Mammary epithelial cell (primary cell): ENCODE measurements at regions of chr1 and their contacts with region 1.

Region 1: GRCh38 chr1:198465201-198466144 is 75.0 kb downstream of the ATP6V1G3 start:
- DNase-seq: peak; percentile 66
- H3K4me3 ChIP-seq: no peak overlapping the region
- H3K27ac ChIP-seq: peak overlapping the region; percentile 25
- H3K4me1 ChIP-seq: peaks cover 29% of the 10 kb centered on the region
- H3K27me3 ChIP-seq: no peaks in the 10 kb centered on the region
- CTCF ChIP-seq: peak; percentile 61 to 65

Region 2: DNA sequence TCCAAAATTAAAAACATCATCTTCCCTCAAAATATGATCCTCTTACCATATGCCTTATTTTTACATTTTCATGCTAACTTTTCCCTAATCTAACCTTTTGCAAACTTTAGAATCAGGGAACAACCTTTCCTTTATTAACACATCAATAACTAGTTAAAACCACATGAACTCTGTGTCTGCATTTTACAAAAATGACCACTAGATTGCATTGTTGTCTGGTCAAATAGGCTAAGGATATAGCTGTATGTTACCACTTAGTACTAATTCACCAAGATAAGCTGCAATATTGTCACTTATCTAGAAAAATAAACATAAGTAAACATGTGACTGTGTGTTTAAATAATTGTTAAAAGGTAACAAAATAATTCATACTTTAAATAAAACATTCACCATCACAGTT is 772.5 kb before region 1 on chr1:
- CTCF ChIA-PET with region 1: no interaction called
- dilution Hi-C with region 1: no loop called
- in situ Hi-C with region 1: no loop called
- intact Hi-C with region 1: loop called (anchors 10 kb)
- DNase-seq: peak; percentile 11
- H3K4me3 ChIP-seq: no peak overlapping the region
- H3K27ac ChIP-seq: no peak overlapping the region
- H3K4me1 ChIP-seq: peaks cover 5% of the 10 kb centered on the region
- H3K27me3 ChIP-seq: no peaks in the 10 kb centered on the region
- CTCF ChIP-seq: peak; percentile 29 to 55

Region 3: DNA sequence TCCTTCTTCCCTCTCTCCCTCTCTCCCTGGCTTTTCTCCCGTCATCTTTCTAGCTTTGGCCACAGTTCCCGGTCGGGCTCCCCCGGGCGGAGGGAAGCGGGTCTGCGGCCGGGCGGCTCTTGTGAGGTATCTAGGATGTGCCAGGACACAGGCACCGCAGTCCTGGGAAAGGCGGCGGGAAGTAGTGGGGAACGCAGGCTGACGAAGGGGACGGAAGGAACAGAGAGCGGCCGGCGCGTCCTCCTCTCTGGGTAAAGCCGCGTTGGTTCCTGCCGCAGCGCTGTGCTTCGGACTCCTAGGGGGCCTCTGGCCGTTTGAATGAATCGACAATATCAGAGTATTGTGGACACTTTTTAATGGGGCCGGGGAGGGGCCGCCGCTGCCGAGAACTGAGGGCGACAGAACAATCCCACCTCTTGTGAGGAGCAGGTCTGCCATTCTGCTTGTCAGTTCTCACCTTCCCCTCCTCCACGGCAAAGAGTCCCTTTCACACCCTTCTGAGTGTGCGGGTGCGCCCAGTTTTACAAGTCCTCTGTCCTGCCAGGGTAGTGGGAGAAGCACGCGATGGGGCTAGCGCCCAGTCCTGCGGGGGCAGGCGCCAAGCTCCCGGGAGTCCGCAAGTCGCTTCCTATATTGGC is 549.5 kb before region 1 on chr1:
- CTCF ChIA-PET with region 1: no interaction called
- dilution Hi-C with region 1: no loop called
- in situ Hi-C with region 1: no loop called
- intact Hi-C with region 1: loop called (anchors 5 kb)
- DNase-seq: peak; percentile 56
- H3K4me3 ChIP-seq: peak overlapping the region; percentile 18 to 44 (median 38)
- H3K27ac ChIP-seq: no peak overlapping the region
- H3K4me1 ChIP-seq: peaks cover 36% of the 10 kb centered on the region
- H3K27me3 ChIP-seq: peaks cover 85% of the 10 kb centered on the region
- CTCF ChIP-seq: peak; percentile 25 to 65

Region 4: DNA sequence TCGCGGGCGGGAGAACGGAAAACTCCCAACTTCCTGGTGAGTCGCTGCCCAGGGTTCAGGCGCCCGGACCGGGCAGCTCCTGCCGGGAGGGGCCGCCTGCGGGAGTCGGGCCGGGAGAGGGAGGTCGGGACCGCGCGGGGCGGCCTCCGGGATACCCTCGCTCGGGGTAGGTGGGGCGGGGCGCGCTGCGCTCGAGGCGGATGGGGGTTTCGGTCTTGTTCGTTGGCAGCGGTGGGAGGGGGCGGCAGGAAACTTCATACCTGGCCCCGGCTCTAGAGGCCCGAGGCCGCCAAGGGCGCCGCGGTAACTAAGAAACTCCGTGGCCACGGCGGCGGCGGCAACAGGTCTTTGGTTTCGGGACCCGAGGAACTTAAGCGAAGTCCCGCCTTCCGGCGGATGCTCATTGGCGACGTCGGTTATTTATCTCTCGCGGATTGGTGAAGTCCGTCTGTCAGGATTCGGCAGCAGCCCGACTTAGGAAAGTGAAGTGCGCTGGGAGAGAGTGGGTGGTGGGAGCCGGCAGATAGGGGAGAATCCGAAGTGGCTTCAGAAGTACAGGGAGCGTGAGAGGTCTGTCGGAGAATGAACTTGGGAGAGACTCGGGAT is 308.1 kb before region 1 on chr1:
- CTCF ChIA-PET with region 1: interaction called, 11 read pairs
- dilution Hi-C with region 1: no loop called
- in situ Hi-C with region 1: loop called in 1 of 2 experiments (anchors 25 kb)
- intact Hi-C with region 1: loop called (anchors 1 kb)
- DNase-seq: peak; percentile 93
- H3K4me3 ChIP-seq: peak overlapping the region; percentile 70 to 91 (median 81)
- H3K27ac ChIP-seq: peak overlapping the region; percentile 93
- H3K4me1 ChIP-seq: peaks cover 22% of the 10 kb centered on the region
- H3K27me3 ChIP-seq: no peaks in the 10 kb centered on the region
- CTCF ChIP-seq: no peak

Region 5: DNA sequence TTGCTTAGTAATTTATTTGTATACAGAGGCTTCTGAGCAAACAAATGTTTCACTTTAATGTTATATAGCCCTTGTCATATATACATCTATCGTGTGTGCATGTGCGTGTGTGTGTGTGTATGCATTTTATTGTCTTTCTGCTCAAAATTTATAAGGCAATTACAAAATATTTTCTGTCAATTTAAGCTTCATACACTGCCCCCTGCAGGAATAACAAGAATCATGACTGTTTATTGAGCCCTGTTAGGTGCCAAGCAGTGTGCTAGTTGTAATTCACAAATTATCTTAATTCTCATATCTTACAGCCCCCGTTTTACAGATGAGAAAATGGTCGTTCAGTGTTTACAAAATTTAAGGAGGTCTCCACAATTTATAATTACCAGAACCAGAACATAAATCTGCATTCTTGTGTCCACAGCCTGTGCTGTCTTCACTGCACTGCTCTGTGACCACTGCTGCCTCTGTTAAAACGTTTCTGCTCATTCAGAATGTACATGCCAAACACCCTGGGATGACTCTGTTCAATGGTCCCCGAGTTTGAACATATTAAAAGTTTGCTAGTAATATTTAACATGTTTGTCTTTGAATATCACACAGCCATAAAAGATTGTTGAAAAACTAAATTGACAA is 106.3 kb before region 1 on chr1:
- CTCF ChIA-PET with region 1: no interaction called
- dilution Hi-C with region 1: no loop called
- in situ Hi-C with region 1: no loop called
- intact Hi-C with region 1: loop called (anchors 2 kb)
- DNase-seq: no peak
- H3K4me3 ChIP-seq: no peak overlapping the region
- H3K27ac ChIP-seq: no peak overlapping the region
- H3K4me1 ChIP-seq: no peaks in the 10 kb centered on the region
- H3K27me3 ChIP-seq: no peaks in the 10 kb centered on the region
- CTCF ChIP-seq: peak; percentile 44 to 47